ENCODE measurements at regions of chr4 and their contacts with region 1.

Region 1: GRCh38 chr4:140373328-140374129 is at the start of gene SCOC:
- DNase-seq: peak; percentile 100
- H3K4me3 Mint-ChIP-seq: no peak within 1 kb of the TSS
- H3K27ac Mint-ChIP-seq: no peak within 1 kb of the TSS
- H3K4me1 Mint-ChIP-seq: peaks cover 34% of the 10 kb centered on the region
- H3K27me3 Mint-ChIP-seq: no peaks in the 10 kb centered on the region
- CTCF ChIP-seq: no peak
- total RNA-seq, gene SCOC: 49.2 and 57.5 TPM in 2 replicates

Region 2: GRCh38 chr4:140427106-140427961 is 53.8 kb after region 1 on chr4 and contains the start of gene CLGN:
- CTCF ChIA-PET with region 1: interaction called, 14 read pairs
- POLR2A ChIA-PET with region 1: interaction called, 50 read pairs
- intact Hi-C with region 1: loop called (anchors 1 kb)
- DNase-seq: peak; percentile 65
- H3K4me3 Mint-ChIP-seq: peak within 1 kb of the TSS; percentile 85
- H3K27ac Mint-ChIP-seq: peak within 1 kb of the TSS; percentile 91
- H3K4me1 Mint-ChIP-seq: peaks cover 28% of the 10 kb centered on the region
- H3K27me3 Mint-ChIP-seq: no peaks in the 10 kb centered on the region
- CTCF ChIP-seq: peak; percentile 26
- total RNA-seq, gene CLGN: 10.7 and 37.6 TPM in 2 replicates

Region 3: DNA sequence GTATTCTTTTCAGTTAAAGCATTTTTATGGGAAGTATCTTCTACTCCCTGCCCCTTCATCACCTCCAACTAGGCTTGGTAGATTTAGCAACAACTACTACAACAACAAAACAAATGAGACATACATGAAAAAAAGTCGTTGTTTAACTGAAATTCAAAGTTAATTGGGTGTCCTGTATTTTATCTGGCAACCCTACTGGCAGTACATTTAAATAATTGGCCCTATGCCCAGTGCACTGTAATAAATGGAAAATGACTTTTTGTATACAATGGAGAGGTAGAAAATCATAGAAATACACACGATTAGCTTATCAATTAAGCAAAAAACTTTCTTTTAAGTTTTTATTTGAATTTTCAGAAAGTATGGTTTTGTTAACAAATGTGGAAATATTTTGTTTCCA is 75.3 kb after region 1 on chr4:
- CTCF ChIA-PET with region 1: interaction called, 4 read pairs
- POLR2A ChIA-PET with region 1: interaction called, 11 read pairs
- intact Hi-C with region 1: no loop called
- DNase-seq: peak; percentile 51
- H3K4me3 Mint-ChIP-seq: no peak overlapping the region
- H3K27ac Mint-ChIP-seq: peak overlapping the region; percentile 27
- H3K4me1 Mint-ChIP-seq: peaks cover 16% of the 10 kb centered on the region
- H3K27me3 Mint-ChIP-seq: no peaks in the 10 kb centered on the region
- CTCF ChIP-seq: no peak

Region 4: DNA sequence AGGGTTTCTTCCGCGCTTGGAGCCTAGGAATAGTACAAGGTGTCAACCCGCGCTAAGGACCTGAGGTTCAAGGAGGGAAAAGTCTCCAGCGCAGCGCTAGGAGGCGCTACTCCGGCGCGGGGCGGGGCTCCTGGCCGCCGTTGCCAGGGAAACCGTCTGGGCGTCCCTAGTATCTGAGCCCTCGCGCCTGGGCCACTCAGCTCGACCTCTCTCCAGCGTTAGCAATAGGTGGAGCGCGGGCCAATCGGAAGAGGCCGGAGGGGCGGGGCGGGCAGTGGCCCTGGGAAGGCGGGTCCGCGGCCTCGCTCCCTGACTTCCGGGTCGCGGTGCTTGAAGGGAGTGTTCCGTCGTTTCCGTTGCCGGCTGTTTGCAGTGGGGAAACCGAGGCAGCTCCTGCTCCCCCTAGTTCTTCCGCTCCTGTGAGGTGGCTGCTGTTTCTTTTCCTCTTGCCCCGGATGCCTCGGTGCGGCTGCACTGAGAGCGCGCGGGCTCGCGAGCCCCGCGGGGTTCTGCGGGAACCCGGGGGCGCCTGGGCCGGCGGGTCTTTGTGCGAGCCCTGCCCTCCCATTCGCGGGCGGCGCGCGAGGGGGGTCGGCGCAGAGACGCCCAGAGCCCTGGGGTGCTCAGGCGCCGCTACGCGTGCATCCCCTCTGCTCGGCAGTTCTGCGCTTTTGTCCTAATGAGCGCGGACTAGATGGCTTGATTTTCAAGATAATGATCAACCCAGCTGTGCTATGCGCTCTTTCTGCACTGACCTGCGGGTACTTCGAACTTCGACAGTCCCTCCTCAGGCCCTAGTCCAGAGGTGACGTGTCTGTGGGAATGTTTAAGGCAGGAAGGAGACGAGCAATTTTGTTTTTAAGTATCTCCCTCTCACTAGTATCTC is 150.6 kb after region 1 on chr4 and contains the start of gene ELMOD2:
- CTCF ChIA-PET with region 1: interaction called, 7 read pairs
- POLR2A ChIA-PET with region 1: interaction called, 52 read pairs
- intact Hi-C with region 1: loop called (anchors 2 kb)
- DNase-seq: peak; percentile 97
- H3K4me3 Mint-ChIP-seq: peak within 1 kb of the TSS; percentile 76
- H3K27ac Mint-ChIP-seq: peak within 1 kb of the TSS; percentile 47
- H3K4me1 Mint-ChIP-seq: no peaks in the 10 kb centered on the region
- H3K27me3 Mint-ChIP-seq: no peaks in the 10 kb centered on the region
- CTCF ChIP-seq: peak; percentile 84
- total RNA-seq, gene ELMOD2: 29.2 and 45.0 TPM in 2 replicates

Measured in MCF 10A (cell line).